Posterior cingulate gyrus (tissue), 11 donors: ENCODE measurements at regions of chr6 and their contacts with region 1.

Region 1: DNA sequence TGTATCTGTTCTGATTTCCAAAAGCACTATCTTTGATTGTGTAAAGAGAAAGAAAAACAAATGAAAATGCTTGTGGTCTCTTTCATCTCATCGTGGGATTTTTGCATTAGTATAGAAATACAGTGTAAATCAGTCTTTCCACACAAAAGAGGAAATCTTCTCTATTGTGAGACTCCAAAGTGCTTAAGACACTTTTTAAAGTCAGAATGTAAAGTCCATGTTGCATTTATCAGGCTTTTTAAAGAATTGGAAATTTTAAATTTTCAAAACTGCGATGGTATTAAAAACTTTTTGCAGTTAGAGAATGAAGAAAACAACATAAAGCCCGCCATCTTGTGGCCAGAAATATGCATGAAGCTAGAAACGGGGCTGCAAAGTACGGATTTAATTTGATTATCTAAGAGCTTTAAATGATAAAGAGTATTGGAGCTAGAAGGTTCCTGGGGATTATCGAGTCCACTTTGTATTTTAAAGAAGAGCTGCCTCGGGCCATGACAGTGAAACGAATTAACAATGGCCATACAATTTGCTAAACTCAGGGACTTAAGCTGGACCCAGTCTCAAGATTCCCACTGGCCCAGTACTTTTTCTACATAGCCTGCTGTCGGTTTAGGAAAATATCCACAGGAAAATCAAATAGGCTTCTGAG is 339.6 kb downstream of the ARHGAP18 start:
- DNase-seq: peak in 6 of 10 donors; percentile 29 to 83 (median 56)

Region 2: DNA sequence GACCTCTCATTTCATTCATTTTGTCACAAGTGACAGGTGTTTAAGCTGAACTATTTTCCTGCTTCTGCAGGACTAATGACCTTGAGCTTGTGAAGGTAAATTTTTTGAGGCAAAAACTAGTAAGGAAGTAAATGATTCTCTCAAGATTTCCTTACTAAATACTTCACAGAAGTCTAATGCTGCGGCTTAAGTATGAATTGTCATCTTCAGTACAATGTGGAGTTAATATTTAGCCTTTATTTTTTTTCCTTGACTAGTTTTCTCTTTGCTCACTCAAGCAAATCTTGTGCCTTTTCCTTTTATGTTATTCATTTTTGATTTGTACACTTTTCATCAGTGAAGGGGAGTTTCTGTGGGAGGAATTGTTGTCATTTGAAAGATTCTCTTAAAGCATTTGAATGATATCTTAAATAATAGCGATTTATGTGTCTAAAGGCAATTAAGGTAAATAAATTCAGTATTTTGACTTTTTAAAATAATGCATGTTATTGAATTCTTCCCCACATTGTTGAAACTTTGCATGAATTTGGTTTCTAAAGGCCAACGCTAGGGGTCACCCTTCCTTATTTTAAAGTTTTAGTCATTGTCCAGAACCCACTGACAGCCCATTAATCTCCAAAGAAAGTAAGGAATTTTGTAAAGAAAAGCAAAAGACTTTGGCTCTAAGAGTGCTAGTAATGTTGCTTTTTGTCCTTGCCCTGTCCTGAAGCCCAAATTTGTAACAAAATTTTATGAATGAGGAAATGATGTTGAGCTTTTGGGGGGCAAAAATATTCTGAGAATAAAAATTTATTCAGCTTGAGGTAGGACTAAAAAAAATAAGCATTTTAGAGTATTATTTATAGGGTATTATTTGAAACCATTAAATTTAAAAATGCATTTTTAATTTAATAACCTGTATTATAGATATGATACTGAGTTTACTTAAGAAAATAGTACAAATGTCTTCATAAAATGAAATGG is 644.8 kb before region 1 on chr6:
- intact Hi-C with region 1: loop called (anchors 5 kb)
- DNase-seq: peak in 1 of 10 donors; percentile 34

Region 3: GRCh38 chr6:128807577-128807976 is 562.8 kb before region 1 on chr6:
- intact Hi-C with region 1: loop called (anchors 5 kb)
- DNase-seq: no peak

Region 4: GRCh38 chr6:129130959-129131681 is 239.3 kb before region 1 on chr6:
- intact Hi-C with region 1: loop called (anchors 5 kb)
- DNase-seq: no peak